Body of pancreas (tissue), 4 donors: ENCODE measurements at regions of chr2 and their contacts with region 1.

Region 1: DNA sequence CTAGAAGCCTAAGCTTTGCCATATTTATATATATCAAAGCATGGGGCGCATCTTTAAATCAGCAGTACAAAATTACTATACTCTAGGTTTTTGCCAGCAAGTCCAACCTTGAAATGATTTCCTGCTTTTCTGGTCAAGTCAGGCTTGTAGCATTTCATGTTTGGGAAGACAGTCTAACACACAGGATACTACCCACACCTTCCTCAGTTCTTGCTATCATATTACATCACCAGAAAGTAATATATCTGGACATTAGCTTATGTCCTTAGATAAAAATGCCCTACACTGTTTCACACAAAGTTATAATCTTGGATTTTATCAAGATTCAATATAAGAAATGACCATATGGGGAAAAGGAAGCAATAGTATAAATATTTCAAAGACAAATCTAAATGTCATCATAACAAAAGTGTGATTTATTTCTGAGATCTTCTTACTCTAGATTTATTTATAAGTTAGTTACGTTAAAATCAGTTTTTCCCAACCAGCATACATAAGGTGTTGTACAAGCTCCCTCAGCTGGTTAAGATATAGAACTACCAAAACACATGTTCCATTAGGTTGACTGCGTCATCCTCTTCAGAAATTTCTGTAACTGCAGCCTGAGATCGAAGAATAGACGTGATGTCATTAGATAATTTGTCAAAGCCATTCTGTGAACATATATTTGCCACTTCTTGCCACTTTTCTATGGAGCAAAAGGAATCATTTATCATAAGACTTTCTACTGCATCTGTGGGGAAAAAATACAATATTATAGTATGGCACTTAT is 56.7 kb downstream of the CLHC1 start:
- DNase-seq: no peak
- ATAC-seq: peak; percentile 95
- H3K4me3 ChIP-seq: no peak overlapping the region
- H3K27ac ChIP-seq: no peak overlapping the region
- H3K4me1 ChIP-seq: peaks cover 10% of the 10 kb centered on the region
- H3K27me3 ChIP-seq: no peaks in the 10 kb centered on the region
- CTCF ChIP-seq: peak in 6 of 7 experiments; percentile 34 to 85 (median 74)
- POLR2A ChIP-seq: no peak

Region 2: GRCh38 chr2:54899576-54900200 is 275.8 kb before region 1 on chr2:
- intact Hi-C with region 1: loop called (anchors 10 kb)
- DNase-seq: peak; percentile 27 to 61 (median 39)
- ATAC-seq: peak; percentile 79
- H3K4me3 ChIP-seq: no peak overlapping the region
- H3K27ac ChIP-seq: no peak overlapping the region
- H3K4me1 ChIP-seq: peaks cover 2% of the 10 kb centered on the region
- H3K27me3 ChIP-seq: no peaks in the 10 kb centered on the region
- CTCF ChIP-seq: peak; percentile 32 to 82 (median 65)
- POLR2A ChIP-seq: no peak